Lower leg skin (tissue), 4 donors: ENCODE measurements at regions of chr17 and their contacts with region 1.

Region 1: GRCh38 chr17:39928858-39929645 is 1.5 kb downstream of the LRRC3C start:
- DNase-seq: no peak
- H3K4me3 ChIP-seq: no peak overlapping the region
- CTCF ChIP-seq: no peak
- POLR2A ChIP-seq: no peak

Region 2: DNA sequence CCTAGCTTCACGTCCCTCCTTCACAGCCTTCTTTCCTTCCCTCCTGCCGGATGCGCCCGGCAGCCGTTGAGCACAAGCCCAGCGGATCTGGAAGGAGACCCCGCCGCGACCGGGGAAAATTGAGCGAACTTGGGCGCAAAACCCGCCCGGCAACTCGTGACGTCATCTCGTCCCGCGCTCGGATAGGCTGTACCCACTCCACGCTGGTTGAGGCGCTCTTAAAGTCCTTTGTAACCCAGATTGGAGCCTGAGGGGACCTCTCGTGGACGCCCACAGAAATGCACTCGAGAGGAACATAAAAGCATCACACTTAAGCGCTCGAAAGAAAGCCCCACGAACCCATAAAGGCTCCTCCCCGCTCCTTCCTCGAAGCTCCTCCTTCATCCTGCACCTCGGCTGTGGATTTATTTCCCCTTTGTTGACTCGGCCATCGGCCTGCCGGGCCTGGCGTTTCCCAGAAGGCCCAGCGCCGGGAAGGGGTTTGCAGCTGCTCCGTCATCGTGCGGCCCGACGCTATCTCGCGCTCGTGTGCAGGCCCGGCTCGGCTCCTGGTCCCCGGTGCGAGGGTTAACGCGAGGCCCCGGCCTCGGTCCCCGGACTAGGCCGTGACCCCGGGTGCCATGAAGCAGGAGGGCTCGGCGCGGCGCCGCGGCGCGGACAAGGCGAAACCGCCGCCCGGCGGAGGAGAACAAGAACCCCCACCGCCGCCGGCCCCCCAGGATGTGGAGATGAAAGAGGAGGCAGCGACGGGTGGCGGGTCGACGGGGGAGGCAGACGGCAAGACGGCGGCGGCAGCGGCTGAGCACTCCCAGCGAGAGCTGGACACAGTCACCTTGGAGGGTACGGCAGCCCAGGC is 51.5 kb after region 1 on chr17 and contains the start of gene PSMD3:
- intact Hi-C with region 1: loop called (anchors 1 kb)
- DNase-seq: peak; percentile 99 to 100
- H3K4me3 ChIP-seq: peak within 1 kb of the TSS; percentile 97
- CTCF ChIP-seq: peak in 1 of 3 donors; percentile 98
- POLR2A ChIP-seq: peak in 1 of 2 donors; percentile 63
- total RNA-seq, gene PSMD3: 106 to 154 (median 129) TPM

Region 3: DNA sequence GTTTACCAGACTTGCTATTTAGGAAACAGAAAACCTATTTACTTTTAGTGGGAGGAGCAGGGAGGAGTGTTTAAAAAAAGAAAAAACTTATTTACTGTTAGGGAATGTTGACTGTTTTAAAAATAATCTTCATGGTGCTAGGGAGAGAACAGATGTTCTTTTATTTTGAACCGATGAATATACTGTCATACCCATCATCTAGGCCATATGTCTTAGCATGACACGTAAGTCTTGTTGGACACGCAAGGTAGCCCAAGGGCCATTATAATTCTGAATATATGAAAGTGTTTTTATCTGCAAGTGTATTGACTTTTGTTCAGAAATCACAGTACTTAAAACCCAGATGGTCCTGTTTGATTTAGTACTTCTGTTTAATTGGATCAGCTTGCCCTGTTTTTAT is 301.6 kb after region 1 on chr17:
- intact Hi-C with region 1: no loop called
- DNase-seq: no peak
- H3K4me3 ChIP-seq: no peak overlapping the region
- CTCF ChIP-seq: no peak
- POLR2A ChIP-seq: no peak